A549 (cell line): ENCODE measurements at regions of chr11 and their contacts with region 1.

Region 1: DNA sequence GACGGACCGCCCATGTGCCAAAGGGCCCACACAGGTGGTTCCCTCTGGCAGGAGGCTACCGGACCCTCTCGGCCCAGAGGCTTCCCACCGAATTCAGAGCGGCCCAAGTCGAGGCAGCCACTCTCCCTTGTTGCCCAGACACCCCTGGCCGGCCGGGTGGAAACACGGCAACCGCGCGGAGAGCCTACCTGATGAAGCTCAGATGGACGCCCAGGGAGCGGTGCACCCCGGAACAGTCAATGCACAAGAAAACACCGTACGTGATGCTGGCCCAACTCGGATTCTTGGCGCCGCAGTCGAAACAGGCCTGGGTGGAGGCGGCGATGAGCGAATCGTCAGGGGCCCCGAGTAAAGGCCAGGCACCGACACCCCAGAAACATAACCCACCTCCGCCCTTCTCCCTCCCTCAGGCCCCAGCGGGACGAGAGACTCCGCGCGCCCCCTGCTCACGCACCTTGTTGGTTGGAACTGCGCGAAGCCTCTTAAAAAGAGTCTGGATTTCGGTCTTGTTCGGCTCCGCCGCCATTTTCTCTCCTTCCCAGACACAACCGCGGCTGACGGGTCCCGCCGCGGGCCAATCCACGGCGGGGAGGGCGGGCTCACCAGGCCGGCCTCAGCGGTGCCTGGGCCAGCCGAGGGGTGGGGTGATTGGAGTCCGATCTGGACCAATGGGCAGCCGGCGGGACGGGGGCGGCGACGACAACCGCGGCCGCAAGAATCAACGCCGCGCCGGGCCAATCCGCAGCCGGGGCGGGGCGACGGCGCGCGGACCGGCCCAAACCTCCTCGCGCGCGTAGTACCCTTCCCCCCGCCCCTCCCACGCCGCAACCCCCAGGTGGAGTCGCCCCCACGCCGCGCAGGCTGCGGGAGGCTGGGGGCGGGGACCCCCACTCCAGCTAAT is at the start of gene ARFGAP2:
- DNase-seq: peak; percentile 95 to 99
- ATAC-seq: peak; percentile 86 to 96
- H3K4me3 ChIP-seq: peak within 1 kb of the TSS; percentile 100
- H3K27ac ChIP-seq: peak within 1 kb of the TSS; percentile 94 to 100
- H3K4me1 ChIP-seq: peaks cover 14% of the 10 kb centered on the region
- CTCF ChIP-seq: no peak
- EP300 ChIP-seq: no peak
- POLR2A ChIP-seq: peak; percentile 29; the same call in 1 of the 2 replicates
- RAD21 ChIP-seq: no peak
- polyA plus RNA-seq, gene ARFGAP2: 28.3 and 29.5 TPM in 2 replicates

Region 2: DNA sequence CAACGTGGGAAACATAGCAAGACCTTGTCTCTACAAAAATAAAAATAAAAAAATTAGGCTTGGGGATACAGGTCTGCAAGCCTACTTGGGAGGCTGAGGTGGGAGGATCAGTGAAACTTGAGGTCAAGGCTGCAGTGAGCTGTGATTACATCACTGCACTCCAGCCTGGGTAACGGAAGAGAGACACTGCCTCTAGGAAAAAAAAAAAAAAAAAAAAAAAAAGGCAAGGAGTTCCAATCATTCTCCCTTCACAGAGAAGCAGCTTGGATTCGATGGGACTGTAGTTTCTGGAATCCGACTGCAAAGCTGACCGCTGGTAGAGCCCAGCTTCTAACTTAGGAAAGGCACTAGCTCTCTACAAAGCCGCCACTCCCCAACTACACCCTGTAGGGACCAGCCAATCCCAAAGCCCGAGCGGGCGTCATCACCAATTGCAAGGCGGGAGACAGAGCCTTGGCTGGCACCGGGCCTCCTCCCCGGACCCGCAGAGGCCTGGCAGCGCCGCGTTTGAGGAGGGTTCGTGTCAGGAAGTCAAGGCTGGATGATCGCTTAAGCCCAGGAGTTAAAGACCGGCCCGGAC is 37.5 kb after region 1 on chr11:
- CTCF ChIA-PET with region 1: interaction called, 40 read pairs
- POLR2A ChIA-PET with region 1: interaction called, 23 read pairs
- DNase-seq: peak; percentile 95 to 96
- ATAC-seq: peak; percentile 95 to 96
- H3K4me3 ChIP-seq: peak overlapping the region; percentile 77
- H3K27ac ChIP-seq: peak overlapping the region; percentile 96 to 99
- H3K4me1 ChIP-seq: peaks cover 30% of the 10 kb centered on the region
- CTCF ChIP-seq: no peak
- EP300 ChIP-seq: no peak
- POLR2A ChIP-seq: peak; percentile 79
- RAD21 ChIP-seq: no peak

Region 3: DNA sequence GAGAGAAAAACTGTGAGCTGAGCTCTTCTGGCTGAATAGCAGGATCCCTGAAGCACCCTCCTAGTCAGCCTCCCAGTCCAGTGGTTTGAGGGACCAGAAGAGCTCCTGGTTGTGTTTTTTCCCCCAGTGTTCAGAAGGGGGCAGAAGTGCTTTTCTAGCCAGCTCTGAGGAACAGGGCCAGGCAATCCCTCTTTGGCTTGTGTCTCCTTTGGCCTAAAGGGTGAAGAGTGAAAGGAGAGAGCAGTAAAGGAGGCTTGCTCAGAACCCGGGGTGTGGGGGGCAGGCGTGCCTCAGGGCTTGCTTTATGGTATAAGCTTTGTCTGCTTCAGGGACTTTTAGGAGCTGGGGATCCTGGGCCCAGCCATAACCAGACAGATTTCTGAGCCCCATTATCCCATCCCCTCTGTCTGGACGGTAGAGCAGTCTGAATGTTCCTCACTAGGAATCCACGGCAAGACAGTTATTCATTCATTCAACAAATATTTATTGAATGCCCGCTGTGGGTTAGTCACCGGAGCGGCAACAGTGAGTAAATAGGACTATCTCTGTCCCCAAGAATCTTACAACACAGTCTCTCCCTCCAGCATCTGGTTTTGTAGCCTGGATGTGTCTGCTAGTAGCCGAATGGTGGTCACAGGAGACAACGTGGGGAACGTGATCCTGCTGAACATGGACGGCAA is 57.6 kb after region 1 on chr11:
- CTCF ChIA-PET with region 1: interaction called, 47 read pairs
- POLR2A ChIA-PET with region 1: interaction called, 5 read pairs
- DNase-seq: peak; percentile 67 to 90
- ATAC-seq: peak; percentile 88 to 90
- H3K4me3 ChIP-seq: peak overlapping the region; percentile 21
- H3K27ac ChIP-seq: peak overlapping the region; percentile 79 to 89
- H3K4me1 ChIP-seq: peaks cover 46% of the 10 kb centered on the region
- CTCF ChIP-seq: peak; percentile 67
- EP300 ChIP-seq: peak; percentile 25 to 58; a peak in 2 of 5 replicates
- POLR2A ChIP-seq: no peak
- RAD21 ChIP-seq: peak; percentile 75 to 78

Region 4: DNA sequence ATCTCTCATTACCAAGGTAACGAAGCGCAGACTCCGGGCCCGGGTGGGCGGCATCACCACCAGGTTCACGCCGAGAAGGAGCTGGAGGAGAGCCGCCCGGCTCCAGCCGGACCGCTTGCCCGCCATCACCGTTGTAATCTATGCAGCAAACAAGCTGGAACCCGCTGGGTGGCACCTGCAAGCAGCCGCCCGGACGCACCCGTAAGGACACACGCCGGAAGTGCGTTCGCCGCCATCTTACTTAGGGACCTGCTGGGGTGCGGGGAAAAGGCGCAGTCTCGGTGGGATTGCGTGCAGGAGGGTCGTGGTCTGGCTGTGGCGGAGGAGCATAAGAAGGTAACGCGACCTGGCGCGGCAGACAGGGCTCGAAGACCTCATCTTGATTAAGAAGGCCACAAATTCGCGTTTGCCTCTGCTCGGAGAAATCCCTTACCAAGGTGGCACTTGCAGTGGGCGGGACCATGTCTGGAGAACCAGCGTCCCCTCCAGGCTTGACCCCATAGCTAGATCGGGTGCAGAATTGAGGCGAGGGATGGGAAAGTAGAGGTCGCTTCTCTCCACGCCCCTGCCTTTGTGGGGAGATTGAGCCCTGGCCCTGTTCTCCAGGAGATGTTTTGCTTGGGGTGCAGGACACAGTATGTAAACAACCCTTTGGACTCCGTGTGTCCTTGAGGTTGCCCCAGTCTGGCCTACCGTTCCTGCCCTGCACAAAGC is 72.2 kb after region 1 on chr11 and contains the start of gene ACP2:
- CTCF ChIA-PET with region 1: interaction called, 30 read pairs
- POLR2A ChIA-PET with region 1: interaction called, 4 read pairs
- DNase-seq: peak; percentile 81 to 94
- ATAC-seq: peak; percentile 93 to 96
- H3K4me3 ChIP-seq: peak within 1 kb of the TSS; percentile 74
- H3K27ac ChIP-seq: peak within 1 kb of the TSS; percentile 95
- H3K4me1 ChIP-seq: peaks cover 19% of the 10 kb centered on the region; the same call in 2 of the 3 replicates
- CTCF ChIP-seq: peak; percentile 35
- EP300 ChIP-seq: no peak
- POLR2A ChIP-seq: peak; percentile 83; the same call in 1 of the 2 replicates
- RAD21 ChIP-seq: peak; percentile 31 to 39; a peak in 4 of 5 replicates
- polyA plus RNA-seq, gene ACP2: 13.6 and 17.7 TPM in 2 replicates

Region 5: GRCh38 chr11:47355283-47356128 is 178.9 kb after region 1 on chr11:
- CTCF ChIA-PET with region 1: interaction called, 26 read pairs
- POLR2A ChIA-PET with region 1: interaction called, 4 read pairs
- DNase-seq: peak; percentile 89 to 98
- ATAC-seq: peak; percentile 92 to 97
- H3K4me3 ChIP-seq: peak overlapping the region; percentile 43
- H3K27ac ChIP-seq: peak overlapping the region; percentile 90 to 97
- H3K4me1 ChIP-seq: peaks cover 4% of the 10 kb centered on the region; the same call in 1 of the 3 replicates
- CTCF ChIP-seq: peak; percentile 100
- EP300 ChIP-seq: no peak
- POLR2A ChIP-seq: no peak
- RAD21 ChIP-seq: peak; percentile 99 to 100